Naive thymus-derived CD4-positive, alpha-beta T cell (primary cell): ENCODE measurements at regions of chr21 and their contacts with region 1.

Region 1: DNA sequence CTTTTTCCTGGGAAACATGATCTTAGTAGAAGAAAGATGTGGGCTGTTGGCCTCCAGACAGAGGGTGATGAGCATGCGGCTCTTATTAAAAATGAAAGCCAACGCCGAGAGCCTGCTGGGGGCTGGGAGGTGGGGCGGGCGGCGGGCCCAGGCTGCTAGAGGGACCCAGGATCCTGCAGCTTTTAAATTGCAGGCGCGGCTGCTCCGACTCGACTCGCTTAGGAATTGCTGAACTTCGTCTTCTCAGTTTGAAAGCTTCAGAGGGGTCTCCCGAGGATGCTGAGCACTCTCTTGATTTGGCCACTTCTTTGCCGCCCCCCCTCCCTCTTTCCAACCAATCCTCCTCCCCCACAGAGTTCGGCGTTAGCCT is 1.2 kb downstream of the AGPAT3 start:
- DNase-seq: peak in 5 of 9 donors; percentile 17 to 44 (median 31)
- ATAC-seq: peak; percentile 42
- H3K4me3 ChIP-seq: peak overlapping the region; percentile 62
- H3K4me3 Mint-ChIP-seq: peak overlapping the region; percentile 79 to 89 (median 85)
- H3K27ac ChIP-seq: peak overlapping the region; percentile 72
- H3K27ac Mint-ChIP-seq: peak overlapping the region; percentile 77 to 91 (median 89)
- H3K4me1 ChIP-seq: peaks cover 18 to 21% of the 10 kb centered on the region in 2 donors
- H3K4me1 Mint-ChIP-seq: peaks cover 28 to 50% (median 41%) of the 10 kb centered on the region in 7 donors
- H3K27me3 ChIP-seq: no peaks in the 10 kb centered on the region
- H3K27me3 Mint-ChIP-seq: peaks cover 0 to 1% (median 0%) of the 10 kb centered on the region in 5 donors

Region 2: DNA sequence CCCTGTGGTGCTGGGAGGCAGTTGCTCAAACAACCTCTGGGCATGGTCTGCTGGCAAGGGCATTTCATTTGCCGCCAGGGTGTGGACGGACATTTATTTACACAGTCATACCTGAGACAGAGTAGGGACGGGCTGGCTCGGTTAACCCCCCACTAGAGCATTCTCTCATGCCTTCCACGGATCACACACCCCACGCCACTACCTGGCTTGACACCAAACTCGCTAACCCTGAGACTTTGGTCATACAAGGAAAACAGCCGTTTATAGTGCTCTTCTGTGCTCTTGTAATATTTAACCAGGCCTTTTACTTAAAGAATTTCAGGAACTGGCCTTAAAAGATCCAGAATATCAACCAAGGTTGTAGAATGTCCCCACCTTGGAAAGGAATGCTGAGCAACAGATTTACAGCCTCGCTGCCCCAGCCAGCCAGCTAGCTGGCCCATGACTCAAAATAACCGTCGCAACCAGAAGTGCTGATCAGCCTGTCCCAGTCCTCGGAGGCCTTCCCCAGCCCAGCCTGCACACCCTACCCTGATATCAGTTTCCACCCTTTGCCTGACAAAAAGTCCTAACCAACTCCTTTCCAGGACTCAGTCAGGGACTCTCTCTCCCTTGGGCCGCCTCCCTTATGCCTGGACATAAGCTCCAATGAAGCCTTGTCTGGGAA is 153.8 kb before region 1 on chr21:
- CTCF ChIA-PET with region 1: no interaction called
- POLR2A ChIA-PET with region 1: no interaction called
- intact Hi-C with region 1: no loop called
- DNase-seq: no peak
- ATAC-seq: no peak
- H3K4me3 ChIP-seq: no peak overlapping the region
- H3K4me3 Mint-ChIP-seq: no peak overlapping the region
- H3K27ac ChIP-seq: no peak overlapping the region
- H3K27ac Mint-ChIP-seq: no peak overlapping the region
- H3K4me1 ChIP-seq: no peaks in the 10 kb centered on the region
- H3K4me1 Mint-ChIP-seq: peaks cover 0 to 3% (median 0%) of the 10 kb centered on the region in 7 donors
- H3K27me3 ChIP-seq: no peaks in the 10 kb centered on the region
- H3K27me3 Mint-ChIP-seq: peaks cover 0 to 43% (median 0%) of the 10 kb centered on the region in 5 donors

Region 3: DNA sequence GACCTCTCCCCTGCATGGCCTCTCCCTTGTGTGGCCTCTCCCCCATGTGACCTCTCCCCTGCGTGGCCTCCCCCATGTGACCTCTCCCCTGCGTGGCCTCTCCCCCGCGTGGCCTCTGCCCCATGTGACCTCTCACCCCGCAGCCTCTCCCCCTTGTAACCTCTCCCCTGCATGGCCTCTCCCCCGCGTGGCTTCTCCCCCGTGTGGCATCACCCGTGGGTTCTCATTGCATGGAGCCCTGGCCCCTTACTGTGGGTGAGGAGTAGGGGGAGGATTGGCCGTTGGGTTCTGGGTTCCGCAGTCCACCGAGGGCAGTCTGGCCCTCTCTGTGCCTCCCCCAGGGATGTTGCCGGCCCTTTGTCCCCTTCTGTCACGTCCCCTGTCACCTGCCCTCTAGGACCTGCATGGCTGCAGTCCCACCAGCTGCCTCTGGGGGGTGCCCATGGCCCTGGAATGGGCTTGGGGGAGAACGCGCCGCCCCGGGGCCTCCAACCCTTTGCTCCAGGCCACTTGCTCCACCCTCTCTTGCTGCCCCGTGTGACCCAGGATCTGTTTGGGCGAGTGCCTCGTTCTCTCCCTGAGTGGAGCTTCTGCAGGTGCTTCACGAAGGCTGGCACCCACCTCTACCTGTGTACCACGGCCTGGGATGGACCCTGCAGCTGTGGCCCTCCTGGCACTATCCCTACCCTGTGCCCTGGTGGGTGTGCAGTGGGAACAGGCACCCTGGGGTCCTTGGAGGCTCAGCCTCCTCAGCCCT is 55.6 kb before region 1 on chr21:
- CTCF ChIA-PET with region 1: no interaction called
- POLR2A ChIA-PET with region 1: no interaction called
- intact Hi-C with region 1: loop called in 1 of 2 experiments (anchors 2 kb)
- DNase-seq: peak; percentile 70 to 96 (median 84)
- ATAC-seq: peak; percentile 94
- H3K4me3 ChIP-seq: no peak overlapping the region
- H3K4me3 Mint-ChIP-seq: peak overlapping the region in 5 of 10 donors; percentile 13 to 39 (median 25)
- H3K27ac ChIP-seq: no peak overlapping the region
- H3K27ac Mint-ChIP-seq: peak overlapping the region in 4 of 9 donors; percentile 31 to 58 (median 49)
- H3K4me1 ChIP-seq: no peaks in the 10 kb centered on the region
- H3K4me1 Mint-ChIP-seq: peaks cover 4 to 21% (median 12%) of the 10 kb centered on the region in 7 donors
- H3K27me3 ChIP-seq: no peaks in the 10 kb centered on the region
- H3K27me3 Mint-ChIP-seq: no peaks in the 10 kb centered on the region

Region 4: GRCh38 chr21:43880111-43880985 is 14.1 kb after region 1 on chr21:
- CTCF ChIA-PET with region 1: no interaction called
- POLR2A ChIA-PET with region 1: no interaction called
- intact Hi-C with region 1: no loop called
- DNase-seq: no peak
- ATAC-seq: no peak
- H3K4me3 ChIP-seq: no peak overlapping the region
- H3K4me3 Mint-ChIP-seq: peak overlapping the region in 4 of 10 donors; percentile 12 to 33 (median 28)
- H3K27ac ChIP-seq: no peak overlapping the region
- H3K27ac Mint-ChIP-seq: peak overlapping the region in 7 of 9 donors; percentile 12 to 55 (median 32)
- H3K4me1 ChIP-seq: peaks cover 0 to 6% of the 10 kb centered on the region in 2 donors
- H3K4me1 Mint-ChIP-seq: peaks cover 46 to 74% (median 69%) of the 10 kb centered on the region in 7 donors
- H3K27me3 ChIP-seq: no peaks in the 10 kb centered on the region
- H3K27me3 Mint-ChIP-seq: no peaks in the 10 kb centered on the region

Region 5: GRCh38 chr21:43893536-43894205 is 27.4 kb after region 1 on chr21:
- CTCF ChIA-PET with region 1: interaction called, 5 read pairs
- POLR2A ChIA-PET with region 1: interaction called, 9 read pairs
- intact Hi-C with region 1: loop called in 1 of 2 experiments (anchors 2 kb)
- DNase-seq: peak in 5 of 9 donors; percentile 18 to 33 (median 25)
- ATAC-seq: peak; percentile 53
- H3K4me3 ChIP-seq: peak overlapping the region; percentile 44
- H3K4me3 Mint-ChIP-seq: peak overlapping the region; percentile 35 to 79 (median 75)
- H3K27ac ChIP-seq: peak overlapping the region; percentile 53
- H3K27ac Mint-ChIP-seq: peak overlapping the region; percentile 60 to 94 (median 80)
- H3K4me1 ChIP-seq: peaks cover 0 to 9% of the 10 kb centered on the region in 2 donors
- H3K4me1 Mint-ChIP-seq: peaks cover 16 to 58% (median 53%) of the 10 kb centered on the region in 7 donors
- H3K27me3 ChIP-seq: no peaks in the 10 kb centered on the region
- H3K27me3 Mint-ChIP-seq: no peaks in the 10 kb centered on the region

Region 6: GRCh38 chr21:43921979-43922945 is 56.0 kb after region 1 on chr21:
- CTCF ChIA-PET with region 1: no interaction called
- POLR2A ChIA-PET with region 1: interaction called, 9 read pairs
- intact Hi-C with region 1: loop called (anchors 1 to 5 kb)
- DNase-seq: peak in 8 of 9 donors; percentile 40 to 79 (median 70)
- ATAC-seq: peak; percentile 67
- H3K4me3 ChIP-seq: peak overlapping the region; percentile 35
- H3K4me3 Mint-ChIP-seq: peak overlapping the region; percentile 55 to 87 (median 82)
- H3K27ac ChIP-seq: peak overlapping the region; percentile 70
- H3K27ac Mint-ChIP-seq: peak overlapping the region; percentile 84 to 97 (median 94)
- H3K4me1 ChIP-seq: peaks cover 25 to 35% of the 10 kb centered on the region in 2 donors
- H3K4me1 Mint-ChIP-seq: peaks cover 42 to 62% (median 53%) of the 10 kb centered on the region in 7 donors
- H3K27me3 ChIP-seq: no peaks in the 10 kb centered on the region
- H3K27me3 Mint-ChIP-seq: peaks cover 0 to 3% (median 0%) of the 10 kb centered on the region in 5 donors

Region 7: DNA sequence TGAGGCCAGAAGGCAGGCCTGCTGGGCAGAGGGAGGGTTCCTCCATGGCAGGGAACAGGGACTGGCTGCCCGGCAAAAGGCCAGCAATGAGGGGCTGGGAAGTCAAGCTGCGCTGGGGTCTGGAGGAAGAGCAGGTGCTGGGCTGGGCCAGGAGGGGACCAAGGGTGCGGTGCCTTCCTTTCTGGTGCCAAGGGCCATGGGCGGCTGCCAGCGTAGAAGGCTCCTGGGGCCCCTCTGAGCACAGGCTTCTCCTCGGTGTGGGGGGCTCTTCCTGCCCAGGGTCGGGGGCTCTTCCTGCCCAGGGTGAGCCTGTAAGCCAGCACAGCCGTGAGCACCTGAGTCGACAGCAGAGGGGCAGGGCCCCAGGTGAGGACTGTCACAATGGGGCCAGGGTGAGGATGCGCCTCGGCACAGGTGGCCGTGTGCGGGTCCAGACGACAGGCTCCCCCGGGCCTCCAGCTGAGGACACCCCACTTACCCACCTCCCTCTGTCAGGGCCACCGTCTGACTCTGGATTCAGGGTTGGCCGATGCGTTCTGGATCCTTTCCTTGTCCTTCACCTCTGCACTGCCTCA is 406.1 kb after region 1 on chr21:
- CTCF ChIA-PET with region 1: no interaction called
- POLR2A ChIA-PET with region 1: no interaction called
- intact Hi-C with region 1: no loop called
- DNase-seq: peak in 1 of 9 donors; percentile 1
- ATAC-seq: no peak
- H3K4me3 ChIP-seq: no peak overlapping the region
- H3K4me3 Mint-ChIP-seq: no peak overlapping the region
- H3K27ac ChIP-seq: no peak overlapping the region
- H3K27ac Mint-ChIP-seq: no peak overlapping the region
- H3K4me1 ChIP-seq: no peaks in the 10 kb centered on the region
- H3K4me1 Mint-ChIP-seq: peaks cover 0 to 3% (median 0%) of the 10 kb centered on the region in 7 donors
- H3K27me3 ChIP-seq: no peaks in the 10 kb centered on the region
- H3K27me3 Mint-ChIP-seq: peaks cover 0 to 24% (median 0%) of the 10 kb centered on the region in 5 donors

Region 8: GRCh38 chr21:44338971-44339910 is 473.0 kb after region 1 on chr21 and contains the start of gene CFAP410:
- CTCF ChIA-PET with region 1: no interaction called
- POLR2A ChIA-PET with region 1: no interaction called
- intact Hi-C with region 1: no loop called
- DNase-seq: peak; percentile 94 to 97 (median 97)
- ATAC-seq: peak; percentile 92
- H3K4me3 ChIP-seq: peak within 1 kb of the TSS; percentile 97
- H3K4me3 Mint-ChIP-seq: peak within 1 kb of the TSS; percentile 85 to 95 (median 92)
- H3K27ac ChIP-seq: peak within 1 kb of the TSS; percentile 96
- H3K27ac Mint-ChIP-seq: peak within 1 kb of the TSS; percentile 95 to 100 (median 97)
- H3K4me1 ChIP-seq: peaks cover 10 to 15% of the 10 kb centered on the region in 2 donors
- H3K4me1 Mint-ChIP-seq: peaks cover 4 to 33% (median 24%) of the 10 kb centered on the region in 7 donors
- H3K27me3 ChIP-seq: no peaks in the 10 kb centered on the region
- H3K27me3 Mint-ChIP-seq: no peaks in the 10 kb centered on the region
- total RNA-seq, gene CFAP410: 20.8 to 66.7 (median 49.5) TPM